SK-N-SH (cell line): ENCODE measurements at regions of chr2 and their contacts with region 1.

Region 1: GRCh38 chr2:129758784-129759471 is 220.5 kb upstream of the RAB6C start:
- DNase-seq: no peak
- H3K4me3 ChIP-seq: no peak overlapping the region
- H3K27ac ChIP-seq: no peak overlapping the region
- H3K4me1 ChIP-seq: peaks cover 0 to 12% of the 10 kb centered on the region in 2 experiments; a peak in 1 of 4 replicates
- H3K27me3 ChIP-seq: no peaks in the 10 kb centered on the region
- CTCF ChIP-seq: no peak
- EP300 ChIP-seq: no peak
- RAD21 ChIP-seq: no peak

Region 2: DNA sequence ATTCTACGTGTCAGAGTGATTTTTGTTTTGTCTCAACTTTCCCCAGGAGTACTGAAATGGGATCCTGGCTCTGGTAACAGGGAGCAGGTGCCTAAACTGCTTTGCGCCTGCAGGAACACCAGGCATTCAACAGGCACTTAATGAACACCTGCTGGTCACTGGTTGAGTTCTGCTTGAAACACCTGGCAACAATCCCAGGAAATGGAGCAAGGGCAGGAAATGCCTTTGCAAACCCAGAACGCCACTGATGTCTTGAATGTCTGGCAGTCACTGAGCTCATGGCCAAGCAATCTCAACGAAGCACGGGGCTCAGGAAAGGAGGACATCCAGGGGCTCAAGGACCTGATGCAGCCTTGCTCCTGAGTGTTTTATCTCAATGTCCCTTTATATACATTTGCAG is 139.5 kb before region 1 on chr2:
- CTCF ChIA-PET with region 1: no interaction called
- POLR2A ChIA-PET with region 1: no interaction called
- DNase-seq: no peak
- H3K4me3 ChIP-seq: no peak overlapping the region
- H3K27ac ChIP-seq: no peak overlapping the region
- H3K4me1 ChIP-seq: peaks cover 0 to 2% of the 10 kb centered on the region in 2 experiments; a peak in 1 of 4 replicates
- H3K27me3 ChIP-seq: no peaks in the 10 kb centered on the region
- CTCF ChIP-seq: no peak
- EP300 ChIP-seq: no peak
- RAD21 ChIP-seq: no peak

Region 3: DNA sequence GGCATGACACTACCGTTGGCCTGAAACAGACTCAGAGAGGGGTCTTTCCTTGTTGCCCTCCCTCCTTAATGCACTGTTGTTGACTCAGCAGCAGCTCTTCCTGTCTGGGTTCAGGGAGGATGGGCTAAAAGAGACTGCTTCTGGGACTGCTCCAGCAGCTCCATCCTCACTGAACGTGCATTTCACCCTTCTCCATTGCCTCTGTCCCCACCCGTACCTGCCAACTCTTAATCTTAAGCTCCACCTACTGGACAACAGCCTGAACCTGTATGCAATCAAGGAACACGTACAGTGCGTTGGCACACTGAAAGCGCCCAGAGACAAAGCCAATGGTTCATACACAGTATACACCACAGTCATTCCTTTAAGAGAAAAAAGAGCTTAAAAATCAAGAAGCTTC is 10.3 kb before region 1 on chr2:
- CTCF ChIA-PET with region 1: interaction called, 10 read pairs
- POLR2A ChIA-PET with region 1: no interaction called
- DNase-seq: no peak
- H3K4me3 ChIP-seq: no peak overlapping the region
- H3K27ac ChIP-seq: no peak overlapping the region
- H3K4me1 ChIP-seq: no peaks in the 10 kb centered on the region
- H3K27me3 ChIP-seq: no peaks in the 10 kb centered on the region
- CTCF ChIP-seq: no peak
- EP300 ChIP-seq: no peak
- RAD21 ChIP-seq: 0 out of 2 replicates have a peak, but pooled peaks have one; percentile 7